MCF 10A (cell line): ENCODE measurements at regions of chr20 and their contacts with region 1.

Region 1: GRCh38 chr20:22763257-22763906 is 179.0 kb upstream of the FOXA2 start:
- DNase-seq: peak; percentile 81
- H3K4me3 Mint-ChIP-seq: peak overlapping the region; percentile 70
- H3K27ac Mint-ChIP-seq: peak overlapping the region; percentile 95
- H3K4me1 Mint-ChIP-seq: peaks cover 20% of the 10 kb centered on the region
- H3K27me3 Mint-ChIP-seq: no peaks in the 10 kb centered on the region
- CTCF ChIP-seq: no peak

Region 2: GRCh38 chr20:22652681-22653588 is 110.4 kb before region 1 on chr20:
- CTCF ChIA-PET with region 1: no interaction called
- POLR2A ChIA-PET with region 1: no interaction called
- intact Hi-C with region 1: no loop called
- DNase-seq: no peak
- H3K4me3 Mint-ChIP-seq: no peak overlapping the region
- H3K27ac Mint-ChIP-seq: no peak overlapping the region
- H3K4me1 Mint-ChIP-seq: no peaks in the 10 kb centered on the region
- H3K27me3 Mint-ChIP-seq: no peaks in the 10 kb centered on the region
- CTCF ChIP-seq: no peak

Region 3: GRCh38 chr20:22723648-22724047 is 39.7 kb before region 1 on chr20:
- CTCF ChIA-PET with region 1: interaction called, 11 read pairs
- POLR2A ChIA-PET with region 1: interaction called, 6 read pairs
- intact Hi-C with region 1: no loop called
- DNase-seq: no peak
- H3K4me3 Mint-ChIP-seq: no peak overlapping the region
- H3K27ac Mint-ChIP-seq: no peak overlapping the region
- H3K4me1 Mint-ChIP-seq: peaks cover 7% of the 10 kb centered on the region
- H3K27me3 Mint-ChIP-seq: no peaks in the 10 kb centered on the region
- CTCF ChIP-seq: no peak

Region 4: DNA sequence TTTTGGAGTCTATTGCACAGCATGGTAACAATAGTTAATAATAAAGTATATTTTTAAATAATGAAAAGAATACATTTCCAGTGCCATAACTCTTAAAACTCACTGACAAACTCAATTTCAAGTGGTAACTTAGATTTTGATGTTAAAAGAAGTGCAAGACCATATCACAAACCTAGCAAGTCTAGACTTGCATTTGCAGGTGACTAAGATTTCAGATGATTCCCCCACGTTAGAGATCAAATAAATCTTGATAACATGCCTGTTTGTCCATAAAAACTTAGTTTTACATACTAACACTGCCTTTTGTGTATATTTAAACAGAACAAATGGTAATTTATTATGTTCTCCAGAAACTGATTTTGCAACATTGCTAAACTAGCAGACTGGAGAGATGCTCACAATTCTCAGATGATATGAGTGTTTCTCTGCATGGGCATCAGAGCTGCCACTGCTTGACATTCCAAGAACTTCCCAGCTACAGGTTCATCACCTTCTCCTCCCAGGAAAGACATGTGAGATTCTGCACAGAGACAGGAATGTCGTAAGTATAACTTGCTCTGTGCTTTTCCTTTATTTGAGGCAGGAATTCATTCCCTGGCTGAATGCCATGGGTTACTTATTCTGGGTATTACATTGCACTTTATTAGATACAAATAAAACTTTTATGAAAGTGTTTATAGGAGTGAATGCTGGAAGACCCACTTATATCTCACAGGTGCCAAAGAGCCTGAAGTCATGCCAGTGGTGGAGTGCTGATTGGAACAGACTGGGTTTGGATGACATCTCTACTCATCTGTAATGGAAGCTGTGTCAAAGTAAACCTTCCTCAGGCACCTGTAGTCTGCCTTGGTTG is 18.8 kb before region 1 on chr20:
- CTCF ChIA-PET with region 1: interaction called, 8 read pairs
- POLR2A ChIA-PET with region 1: interaction called, 24 read pairs
- intact Hi-C with region 1: no loop called
- DNase-seq: peak; percentile 9
- H3K4me3 Mint-ChIP-seq: no peak overlapping the region
- H3K27ac Mint-ChIP-seq: no peak overlapping the region
- H3K4me1 Mint-ChIP-seq: peaks cover 5% of the 10 kb centered on the region
- H3K27me3 Mint-ChIP-seq: no peaks in the 10 kb centered on the region
- CTCF ChIP-seq: no peak

Region 5: GRCh38 chr20:22775671-22776139 is 12.3 kb after region 1 on chr20:
- CTCF ChIA-PET with region 1: interaction called, 13 read pairs
- POLR2A ChIA-PET with region 1: interaction called, 51 read pairs
- intact Hi-C with region 1: no loop called
- DNase-seq: peak; percentile 88
- H3K4me3 Mint-ChIP-seq: peak overlapping the region; percentile 45
- H3K27ac Mint-ChIP-seq: peak overlapping the region; percentile 72
- H3K4me1 Mint-ChIP-seq: peaks cover 59% of the 10 kb centered on the region
- H3K27me3 Mint-ChIP-seq: no peaks in the 10 kb centered on the region
- CTCF ChIP-seq: no peak

Region 6: DNA sequence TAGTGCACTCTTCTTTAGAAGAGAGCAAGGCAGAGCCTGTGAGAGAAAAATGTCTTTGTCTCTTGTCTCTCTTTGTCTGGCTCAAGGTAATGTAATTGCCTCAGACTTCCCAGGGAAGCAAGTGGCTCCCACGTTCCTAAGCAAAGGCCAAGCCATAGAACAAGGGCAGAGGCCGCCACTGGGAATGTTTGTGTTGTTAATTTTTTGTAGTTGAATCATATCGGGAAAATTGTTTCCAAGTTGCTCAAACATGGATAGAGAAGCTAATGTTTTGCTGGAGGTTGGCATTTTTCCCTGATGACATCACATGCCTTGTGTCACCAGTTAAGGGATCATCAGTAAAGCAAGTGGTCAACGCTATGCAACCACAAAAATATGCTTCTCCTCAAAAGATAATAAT is 32.5 kb after region 1 on chr20:
- CTCF ChIA-PET with region 1: interaction called, 3 read pairs
- POLR2A ChIA-PET with region 1: interaction called, 20 read pairs
- intact Hi-C with region 1: no loop called
- DNase-seq: peak; percentile 93
- H3K4me3 Mint-ChIP-seq: no peak overlapping the region
- H3K27ac Mint-ChIP-seq: peak overlapping the region; percentile 5
- H3K4me1 Mint-ChIP-seq: peaks cover 48% of the 10 kb centered on the region
- H3K27me3 Mint-ChIP-seq: no peaks in the 10 kb centered on the region
- CTCF ChIP-seq: no peak

Region 7: DNA sequence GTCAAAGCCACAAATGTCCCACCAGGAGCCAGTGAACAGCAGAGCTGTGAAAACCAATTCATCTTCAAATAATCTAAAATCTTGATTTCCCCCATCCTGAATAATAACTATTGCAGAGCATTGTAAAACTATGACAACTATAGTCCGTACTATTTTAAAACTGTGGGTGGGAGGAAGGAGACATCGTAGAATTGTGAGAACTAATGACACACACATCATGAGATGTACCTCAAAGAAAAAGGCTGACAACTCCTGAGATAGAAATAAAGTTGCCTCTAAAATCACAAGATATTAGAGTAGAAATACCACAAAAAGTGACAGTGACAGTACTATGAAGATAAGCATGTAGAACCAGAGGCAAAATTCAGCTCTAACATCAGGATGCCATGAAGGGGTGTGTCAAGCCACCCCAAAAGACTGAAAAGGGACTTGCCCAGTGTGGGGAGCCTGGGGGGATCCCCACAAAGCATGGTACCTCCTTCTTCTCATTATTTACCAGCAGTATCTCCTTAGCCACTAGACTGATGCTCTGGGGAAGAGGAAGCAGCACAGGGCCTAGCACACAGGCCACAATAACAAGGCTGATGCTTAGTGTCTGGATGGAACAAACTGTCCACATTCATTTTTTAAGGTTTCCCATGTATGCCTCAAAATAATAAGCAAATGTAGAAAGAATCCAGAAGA is 644.5 kb after region 1 on chr20:
- CTCF ChIA-PET with region 1: no interaction called
- POLR2A ChIA-PET with region 1: no interaction called
- intact Hi-C with region 1: loop called (anchors 5 kb)
- DNase-seq: no peak
- H3K4me3 Mint-ChIP-seq: no peak overlapping the region
- H3K27ac Mint-ChIP-seq: no peak overlapping the region
- H3K4me1 Mint-ChIP-seq: peaks cover 25% of the 10 kb centered on the region
- H3K27me3 Mint-ChIP-seq: no peaks in the 10 kb centered on the region
- CTCF ChIP-seq: no peak